Activated T-helper 2 cell treated with anti-CD3 and anti-CD28 coated beads, Interferon-gamma antibody, Interleukin-2, Interleukin-4, amounts not matched to agents 10 μg/mL and 5 μg/mL and 100 μg/mL, durations not matched to agents 14 hours and 24 hours and 36 hours (primary cell): ENCODE measurements at regions of chr6 and their contacts with region 1.

Region 1: GRCh38 chr6:24431045-24431451 is 28.3 kb downstream of the MRS2 start:
- DNase-seq: no peak
- H3K4me3 Mint-ChIP-seq: no peak overlapping the region
- H3K27ac Mint-ChIP-seq: no peak overlapping the region
- H3K4me1 Mint-ChIP-seq: peaks cover 2% of the 10 kb centered on the region
- H3K27me3 Mint-ChIP-seq: no peaks in the 10 kb centered on the region

Region 2: GRCh38 chr6:24520929-24521546 is 90.0 kb after region 1 on chr6:
- intact Hi-C with region 1: loop called (anchors 1 kb)
- DNase-seq: no peak
- H3K4me3 Mint-ChIP-seq: no peak overlapping the region
- H3K27ac Mint-ChIP-seq: no peak overlapping the region
- H3K4me1 Mint-ChIP-seq: peaks cover 14% of the 10 kb centered on the region
- H3K27me3 Mint-ChIP-seq: no peaks in the 10 kb centered on the region

Region 3: DNA sequence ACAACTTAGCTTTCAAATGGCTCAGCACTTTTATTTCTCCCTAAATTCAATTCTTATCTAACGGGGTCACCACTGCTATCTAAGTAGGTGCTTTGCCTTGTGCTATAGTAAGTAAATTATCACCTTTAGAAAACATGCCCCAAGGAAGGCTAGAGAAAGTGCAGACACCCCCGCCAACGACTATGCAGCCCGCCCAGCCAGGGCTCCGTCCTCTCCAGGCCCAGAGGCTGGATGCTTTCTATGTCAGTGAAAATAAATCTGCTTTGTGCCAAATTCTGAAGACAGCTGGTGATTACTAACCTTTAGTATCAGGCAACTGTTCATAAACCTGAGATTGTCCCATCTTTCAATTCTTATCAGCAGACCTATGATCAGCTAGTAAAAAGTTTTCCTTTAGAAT is 200.6 kb after region 1 on chr6:
- intact Hi-C with region 1: no loop called
- DNase-seq: no peak
- H3K4me3 Mint-ChIP-seq: no peak overlapping the region
- H3K27ac Mint-ChIP-seq: no peak overlapping the region
- H3K4me1 Mint-ChIP-seq: no peaks in the 10 kb centered on the region
- H3K27me3 Mint-ChIP-seq: peaks cover 43% of the 10 kb centered on the region

Region 4: DNA sequence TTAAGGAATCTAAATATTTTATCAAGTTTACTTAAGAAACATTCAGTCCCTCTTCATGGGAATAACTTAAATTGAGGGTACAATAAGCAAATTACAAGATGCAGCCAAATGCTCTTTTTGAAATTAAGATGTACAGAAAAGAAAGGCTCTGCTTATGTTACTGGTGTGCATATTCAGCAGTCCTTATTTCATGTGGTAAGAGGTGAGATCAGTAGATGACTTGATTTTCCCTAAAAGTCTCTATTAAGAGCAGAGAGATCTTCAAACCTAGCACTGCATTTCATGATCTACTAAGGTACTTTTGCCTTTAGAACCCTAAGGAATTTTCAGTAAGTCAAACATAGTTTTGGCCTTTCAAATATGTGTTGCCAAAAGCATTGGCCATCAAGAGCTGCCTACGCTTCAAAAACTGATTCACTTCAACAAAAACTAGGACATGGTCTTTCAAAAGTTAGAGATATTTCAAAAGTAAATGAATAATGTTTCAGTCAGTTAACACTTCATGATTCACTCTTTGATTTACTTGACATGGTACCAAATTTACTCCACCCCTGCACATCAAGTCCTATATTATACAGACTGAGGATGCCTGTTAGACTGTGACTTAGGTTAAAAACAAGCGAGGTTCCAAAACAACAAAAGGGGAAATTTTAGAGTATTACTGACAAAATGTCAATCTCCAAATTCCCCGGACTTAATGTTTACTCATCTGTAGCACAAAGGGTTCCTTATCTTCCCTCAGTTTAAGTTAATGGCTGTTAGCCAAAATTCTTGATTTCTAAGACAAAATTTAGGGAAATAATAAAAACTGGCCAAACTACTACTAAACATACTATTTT is 268.7 kb after region 1 on chr6:
- intact Hi-C with region 1: loop called (anchors 5 kb)
- DNase-seq: no peak
- H3K4me3 Mint-ChIP-seq: no peak overlapping the region
- H3K27ac Mint-ChIP-seq: peak overlapping the region; percentile 60
- H3K4me1 Mint-ChIP-seq: peaks cover 14% of the 10 kb centered on the region
- H3K27me3 Mint-ChIP-seq: no peaks in the 10 kb centered on the region